MCF 10A (cell line): ENCODE measurements at regions of chr7 and their contacts with region 1.

Region 1: GRCh38 chr7:116984917-116985316 is 31.6 kb downstream of the ST7 start:
- DNase-seq: peak; percentile 49
- H3K4me3 Mint-ChIP-seq: no peak overlapping the region
- H3K27ac Mint-ChIP-seq: no peak overlapping the region
- H3K4me1 Mint-ChIP-seq: peaks cover 5% of the 10 kb centered on the region
- H3K27me3 Mint-ChIP-seq: no peaks in the 10 kb centered on the region
- CTCF ChIP-seq: peak; percentile 62

Region 2: GRCh38 chr7:116929914-116930913 is 54.7 kb before region 1 on chr7:
- CTCF ChIA-PET with region 1: interaction called, 42 read pairs
- POLR2A ChIA-PET with region 1: no interaction called
- intact Hi-C with region 1: loop called (anchors 2 kb)
- DNase-seq: peak; percentile 84
- H3K4me3 Mint-ChIP-seq: no peak overlapping the region
- H3K27ac Mint-ChIP-seq: no peak overlapping the region
- H3K4me1 Mint-ChIP-seq: peaks cover 6% of the 10 kb centered on the region
- H3K27me3 Mint-ChIP-seq: no peaks in the 10 kb centered on the region
- CTCF ChIP-seq: peak; percentile 84

Region 3: DNA sequence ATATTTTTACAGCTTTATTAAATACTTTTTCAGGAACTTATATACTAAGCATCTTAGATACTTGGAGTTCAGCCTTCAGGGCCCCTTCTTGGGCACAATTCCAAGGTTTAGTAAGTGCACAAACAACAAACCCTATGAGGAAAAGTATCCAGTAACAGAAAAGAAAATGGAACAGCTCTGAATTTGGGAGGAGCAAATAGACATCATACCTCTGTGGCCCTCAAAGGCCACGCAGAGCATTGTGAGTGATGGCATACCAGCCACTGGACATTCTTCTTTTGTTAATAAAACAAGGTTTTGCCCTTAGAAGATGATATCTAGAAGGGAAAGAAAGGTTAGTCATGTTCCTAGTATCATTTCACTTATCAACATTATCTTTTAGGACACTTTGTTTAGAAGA is 14.4 kb after region 1 on chr7:
- CTCF ChIA-PET with region 1: interaction called, 28 read pairs
- POLR2A ChIA-PET with region 1: interaction called, 5 read pairs
- intact Hi-C with region 1: no loop called
- DNase-seq: no peak
- H3K4me3 Mint-ChIP-seq: no peak overlapping the region
- H3K27ac Mint-ChIP-seq: no peak overlapping the region
- H3K4me1 Mint-ChIP-seq: no peaks in the 10 kb centered on the region
- H3K27me3 Mint-ChIP-seq: no peaks in the 10 kb centered on the region
- CTCF ChIP-seq: no peak

Region 4: GRCh38 chr7:117014673-117015133 is 29.8 kb after region 1 on chr7:
- CTCF ChIA-PET with region 1: interaction called, 26 read pairs
- POLR2A ChIA-PET with region 1: no interaction called
- intact Hi-C with region 1: loop called (anchors 1 kb)
- DNase-seq: no peak
- H3K4me3 Mint-ChIP-seq: no peak overlapping the region
- H3K27ac Mint-ChIP-seq: no peak overlapping the region
- H3K4me1 Mint-ChIP-seq: peaks cover 12% of the 10 kb centered on the region
- H3K27me3 Mint-ChIP-seq: no peaks in the 10 kb centered on the region
- CTCF ChIP-seq: no peak

Region 5: DNA sequence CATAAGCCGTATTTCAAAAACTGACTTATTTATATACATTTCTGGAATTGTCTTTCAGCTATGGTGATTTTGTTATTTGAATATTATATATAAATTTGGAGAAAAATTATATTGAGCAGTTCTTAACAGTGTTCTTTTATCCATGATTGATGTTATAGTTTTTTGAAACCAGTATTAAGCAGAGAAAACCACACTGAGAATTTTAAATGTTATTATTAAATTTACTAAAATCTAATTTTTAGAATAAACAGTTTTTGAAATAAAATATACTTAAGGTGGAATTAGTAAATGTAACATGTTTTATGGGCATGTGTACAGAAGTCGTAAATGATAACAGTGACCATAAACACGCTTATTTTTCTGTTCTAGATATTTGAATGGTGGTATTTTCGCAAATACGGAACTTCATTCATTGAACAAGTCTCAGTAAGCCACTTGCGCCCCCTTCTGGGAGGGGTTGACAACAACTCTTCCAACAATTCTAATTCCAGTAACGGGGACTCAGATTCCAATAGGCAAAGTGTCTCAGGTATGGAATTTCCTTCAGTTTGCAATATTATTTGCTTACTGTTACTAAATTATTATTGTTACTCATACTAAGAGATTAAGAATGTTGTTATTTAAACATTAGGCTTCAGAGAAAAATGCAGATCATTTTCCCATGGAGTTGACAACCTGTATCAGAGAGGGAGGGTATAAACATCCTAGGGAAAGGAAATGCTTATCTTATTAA is 134.4 kb after region 1 on chr7:
- CTCF ChIA-PET with region 1: interaction called, 278 read pairs
- POLR2A ChIA-PET with region 1: interaction called, 4 read pairs
- intact Hi-C with region 1: loop called (anchors 1 kb)
- DNase-seq: peak; percentile 91
- H3K4me3 Mint-ChIP-seq: no peak overlapping the region
- H3K27ac Mint-ChIP-seq: no peak overlapping the region
- H3K4me1 Mint-ChIP-seq: peaks cover under 1% of the 10 kb centered on the region
- H3K27me3 Mint-ChIP-seq: no peaks in the 10 kb centered on the region
- CTCF ChIP-seq: peak; percentile 74

Region 6: GRCh38 chr7:117385340-117386109 is 400.6 kb after region 1 on chr7:
- CTCF ChIA-PET with region 1: interaction called, 4 read pairs
- POLR2A ChIA-PET with region 1: no interaction called
- intact Hi-C with region 1: loop called (anchors 5 kb)
- DNase-seq: peak; percentile 16
- H3K4me3 Mint-ChIP-seq: no peak overlapping the region
- H3K27ac Mint-ChIP-seq: no peak overlapping the region
- H3K4me1 Mint-ChIP-seq: no peaks in the 10 kb centered on the region
- H3K27me3 Mint-ChIP-seq: peaks cover 57% of the 10 kb centered on the region
- CTCF ChIP-seq: peak; percentile 35